ENCODE measurements at regions of chr15 and their contacts with region 1.

Region 1: DNA sequence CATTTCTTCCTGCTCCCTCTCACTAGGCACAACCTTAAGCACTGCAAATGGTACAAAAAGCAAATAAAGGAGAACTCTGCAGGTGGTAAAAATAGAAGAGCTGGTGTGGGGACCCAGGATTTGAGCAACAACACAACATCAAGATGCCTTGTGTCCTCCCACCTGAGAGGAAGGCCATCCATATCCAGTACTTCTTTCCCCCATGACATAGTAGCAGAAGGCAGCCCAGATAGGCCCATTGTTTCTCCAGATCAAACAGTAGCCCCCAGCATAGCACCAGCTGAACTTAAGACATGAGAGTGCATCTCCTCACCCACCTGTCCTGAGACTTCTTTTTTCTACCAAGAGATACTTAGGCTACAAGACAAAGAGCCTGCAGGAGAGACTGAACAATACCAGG is 180.5 kb downstream of the GOLGA6L6 start:
- DNase-seq: no peak

Region 2: GRCh38 chr15:20305040-20305392 is 56.1 kb before region 1 on chr15:
- in situ Hi-C with region 1: no loop called
- DNase-seq: no peak

Region 3: DNA sequence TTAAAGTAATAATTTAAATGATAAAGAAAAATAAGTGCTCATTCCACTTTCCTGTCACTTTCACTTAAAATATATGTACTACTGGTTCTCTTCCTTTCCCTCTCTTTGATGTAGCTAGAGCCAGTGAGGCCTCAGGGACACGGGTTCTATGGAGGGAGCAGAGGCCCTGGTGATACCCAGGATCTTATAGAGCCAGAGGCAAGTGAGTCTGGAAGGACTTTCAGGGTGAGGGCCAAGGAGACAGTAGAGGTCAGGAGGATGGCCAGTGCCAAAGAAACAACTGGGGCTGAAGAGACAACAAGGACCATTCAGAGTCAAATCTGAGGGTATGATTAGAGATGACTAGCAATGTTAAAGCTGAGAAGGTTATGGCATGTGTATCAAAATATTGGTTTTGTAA is 304.6 kb after region 1 on chr15:
- in situ Hi-C with region 1: no loop called
- DNase-seq: no peak

Region 4: GRCh38 chr15:22240951-22241350 is 1879.9 kb after region 1 on chr15:
- in situ Hi-C with region 1: loop called (anchors 10 kb)
- DNase-seq: no peak

Measured in KBM-7 (cell line).